ENCODE measurements at regions of chr2 and their contacts with region 1.

Region 1: GRCh38 chr2:58240670-58241545 is at the start of gene FANCL:
- DNase-seq: peak; percentile 87
- H3K4me3 ChIP-seq: peak within 1 kb of the TSS; percentile 35 to 92 (median 73)
- H3K27ac ChIP-seq: peak within 1 kb of the TSS; percentile 27
- H3K4me1 ChIP-seq: peaks cover 16% of the 10 kb centered on the region
- H3K27me3 ChIP-seq: peaks cover 0 to 2% of the 10 kb centered on the region in 2 experiments
- CTCF ChIP-seq: no peak
- POLR2A ChIP-seq: peak; percentile 70
- total RNA-seq, gene FANCL: 15.8 and 16.7 TPM in 2 replicates

Region 2: DNA sequence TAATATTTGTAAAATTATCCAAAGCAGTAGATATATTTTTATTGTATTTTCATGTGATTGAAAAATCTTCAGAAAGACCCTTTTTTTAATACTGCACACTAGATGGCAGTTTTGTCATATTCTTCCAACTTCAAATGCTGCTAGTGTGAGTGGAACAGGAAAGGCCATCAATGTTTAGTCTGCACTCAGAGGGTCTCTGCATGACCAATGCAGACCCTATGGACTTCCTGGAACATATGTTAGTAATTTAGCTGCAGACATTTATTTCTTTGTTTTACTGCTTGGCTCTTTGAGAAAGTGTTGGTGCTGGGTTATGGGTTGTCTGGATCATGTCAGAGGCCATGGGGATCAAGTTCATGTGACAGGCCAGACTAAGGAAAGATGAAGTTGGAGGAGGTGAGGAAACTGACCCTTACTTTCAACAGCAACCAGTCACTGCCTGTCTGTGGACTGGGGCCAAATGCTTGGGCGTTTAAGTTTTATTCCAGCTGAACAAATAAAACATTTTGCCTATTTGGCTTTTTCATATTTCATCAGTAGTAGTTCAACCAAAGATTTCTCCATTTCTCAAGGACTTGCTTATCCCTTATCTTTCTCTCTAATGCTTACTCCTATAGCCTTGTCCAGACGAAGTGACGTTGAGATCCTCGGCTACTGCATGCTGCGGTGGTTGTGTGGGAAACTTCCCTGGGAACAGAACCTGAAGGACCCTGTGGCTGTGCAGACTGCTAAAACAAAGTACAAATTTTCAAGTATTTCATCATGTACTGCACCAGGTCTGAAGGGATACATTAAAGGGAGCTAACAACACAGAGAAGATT is 109.5 kb before region 1 on chr2:
- CTCF ChIA-PET with region 1: no interaction called
- POLR2A ChIA-PET with region 1: no interaction called
- dilution Hi-C with region 1: no loop called
- intact Hi-C with region 1: loop called (anchors 2 kb)
- DNase-seq: peak; percentile 46
- H3K4me3 ChIP-seq: no peak overlapping the region
- H3K27ac ChIP-seq: no peak overlapping the region
- H3K4me1 ChIP-seq: peaks cover 3% of the 10 kb centered on the region
- H3K27me3 ChIP-seq: no peaks in the 10 kb centered on the region
- CTCF ChIP-seq: no peak
- POLR2A ChIP-seq: no peak

Region 3: GRCh38 chr2:58204195-58204959 is 36.5 kb before region 1 on chr2:
- CTCF ChIA-PET with region 1: no interaction called
- POLR2A ChIA-PET with region 1: no interaction called
- dilution Hi-C with region 1: no loop called
- intact Hi-C with region 1: loop called (anchors 5 kb)
- DNase-seq: peak; percentile 69
- H3K4me3 ChIP-seq: no peak overlapping the region
- H3K27ac ChIP-seq: no peak overlapping the region
- H3K4me1 ChIP-seq: peaks cover 12% of the 10 kb centered on the region
- H3K27me3 ChIP-seq: no peaks in the 10 kb centered on the region
- CTCF ChIP-seq: no peak
- POLR2A ChIP-seq: no peak